GM18951 (cell line): ENCODE measurements at regions of chr2 and their contacts with region 1.

Region 1: DNA sequence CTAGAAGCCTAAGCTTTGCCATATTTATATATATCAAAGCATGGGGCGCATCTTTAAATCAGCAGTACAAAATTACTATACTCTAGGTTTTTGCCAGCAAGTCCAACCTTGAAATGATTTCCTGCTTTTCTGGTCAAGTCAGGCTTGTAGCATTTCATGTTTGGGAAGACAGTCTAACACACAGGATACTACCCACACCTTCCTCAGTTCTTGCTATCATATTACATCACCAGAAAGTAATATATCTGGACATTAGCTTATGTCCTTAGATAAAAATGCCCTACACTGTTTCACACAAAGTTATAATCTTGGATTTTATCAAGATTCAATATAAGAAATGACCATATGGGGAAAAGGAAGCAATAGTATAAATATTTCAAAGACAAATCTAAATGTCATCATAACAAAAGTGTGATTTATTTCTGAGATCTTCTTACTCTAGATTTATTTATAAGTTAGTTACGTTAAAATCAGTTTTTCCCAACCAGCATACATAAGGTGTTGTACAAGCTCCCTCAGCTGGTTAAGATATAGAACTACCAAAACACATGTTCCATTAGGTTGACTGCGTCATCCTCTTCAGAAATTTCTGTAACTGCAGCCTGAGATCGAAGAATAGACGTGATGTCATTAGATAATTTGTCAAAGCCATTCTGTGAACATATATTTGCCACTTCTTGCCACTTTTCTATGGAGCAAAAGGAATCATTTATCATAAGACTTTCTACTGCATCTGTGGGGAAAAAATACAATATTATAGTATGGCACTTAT is 56.7 kb downstream of the CLHC1 start:
- POLR2A ChIP-seq: no peak

Region 2: DNA sequence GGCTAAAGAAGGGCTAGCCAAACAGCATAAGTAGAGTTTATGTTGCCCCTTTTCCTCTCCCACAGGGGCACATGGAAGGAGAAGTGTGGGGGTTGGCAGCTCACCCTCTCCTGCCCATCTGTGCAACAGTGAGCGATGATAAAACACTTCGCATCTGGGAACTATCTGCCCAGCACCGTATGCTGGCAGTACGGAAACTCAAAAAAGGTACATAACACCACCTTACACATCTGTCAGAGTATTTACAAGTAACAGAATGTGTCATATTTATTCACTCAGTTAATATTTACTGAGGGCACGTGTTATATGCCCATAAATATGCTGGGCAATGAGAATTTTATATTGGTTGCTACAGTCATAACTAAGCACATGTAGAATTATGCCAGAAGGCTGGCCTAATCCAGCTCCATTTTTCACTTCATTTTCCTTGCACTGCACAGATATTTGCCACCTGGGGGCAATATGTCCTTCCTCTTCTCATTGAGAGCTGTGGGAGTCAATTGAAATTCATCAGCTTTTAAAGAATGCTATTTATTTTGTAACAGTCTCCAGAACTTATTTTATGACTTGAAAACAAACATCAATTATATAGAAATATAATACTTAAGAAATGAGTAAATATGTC is 275.8 kb before region 1 on chr2:
- in situ Hi-C with region 1: loop called (anchors 10 kb)
- POLR2A ChIP-seq: no peak

Region 3: DNA sequence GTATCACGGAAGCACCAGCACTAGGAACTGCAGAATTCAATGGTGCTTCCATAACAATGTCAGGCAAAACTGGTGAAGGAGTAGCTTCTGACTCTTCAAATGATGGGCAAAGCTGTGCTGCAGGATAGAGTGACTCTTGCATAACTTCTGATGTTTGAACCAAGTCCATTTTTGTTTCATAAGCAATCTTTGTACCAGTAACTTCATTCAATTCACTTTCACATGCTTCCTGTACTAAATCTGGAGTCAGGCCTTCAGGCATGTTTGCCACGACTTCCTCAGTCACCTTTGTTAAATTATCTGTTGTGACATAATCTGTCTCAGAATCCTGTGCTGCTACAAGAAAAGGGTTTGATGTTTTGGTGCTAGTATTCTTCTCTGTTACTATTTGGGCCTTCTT is 149.2 kb before region 1 on chr2:
- in situ Hi-C with region 1: loop called (anchors 10 kb)
- POLR2A ChIP-seq: no peak